PC-9 (cell line): ENCODE measurements at regions of chr1 and their contacts with region 1.

Region 1: GRCh38 chr1:223683586-223684487 is 18.3 kb upstream of the CAPN8 start:
- DNase-seq: peak; percentile 58 to 76
- H3K4me3 ChIP-seq: no peak overlapping the region
- H3K27ac ChIP-seq: no peak overlapping the region
- H3K4me1 ChIP-seq: no peaks in the 10 kb centered on the region
- H3K27me3 ChIP-seq: no peaks in the 10 kb centered on the region
- CTCF ChIP-seq: peak; percentile 90

Region 2: DNA sequence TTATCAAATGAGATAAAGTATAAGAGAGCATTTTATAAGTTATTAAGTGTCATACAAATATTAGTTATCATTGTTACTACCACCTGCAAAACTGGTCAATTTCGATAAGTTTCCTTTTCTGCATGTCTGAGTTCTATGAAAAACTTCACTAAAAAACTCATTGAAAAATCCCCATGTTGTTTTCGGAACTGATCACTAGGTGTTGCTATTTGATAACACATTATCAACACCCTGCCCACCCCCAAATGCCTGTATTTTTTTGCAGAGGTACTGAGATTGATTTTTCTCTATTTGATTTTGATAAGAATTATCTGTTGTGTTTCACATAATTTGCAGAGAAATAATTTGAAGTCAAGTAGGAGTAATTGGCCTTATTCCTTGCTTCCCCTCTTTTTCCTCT is 891.1 kb before region 1 on chr1:
- CTCF ChIA-PET with region 1: no interaction called
- POLR2A ChIA-PET with region 1: no interaction called
- intact Hi-C with region 1: loop called (anchors 1 kb)
- DNase-seq: no peak
- H3K4me3 ChIP-seq: no peak overlapping the region
- H3K27ac ChIP-seq: no peak overlapping the region
- H3K4me1 ChIP-seq: no peaks in the 10 kb centered on the region
- H3K27me3 ChIP-seq: peaks cover 25% of the 10 kb centered on the region; the same call in 1 of the 2 replicates
- CTCF ChIP-seq: peak; percentile 76

Region 3: GRCh38 chr1:223133824-223134435 is 549.9 kb before region 1 on chr1:
- CTCF ChIA-PET with region 1: interaction called, 9 read pairs
- POLR2A ChIA-PET with region 1: no interaction called
- intact Hi-C with region 1: loop called (anchors 1 kb)
- DNase-seq: peak; percentile 91 to 92
- H3K4me3 ChIP-seq: peak overlapping the region; percentile 51; the same call in 1 of the 2 replicates
- H3K27ac ChIP-seq: peak overlapping the region; percentile 73
- H3K4me1 ChIP-seq: peaks cover 33% of the 10 kb centered on the region
- H3K27me3 ChIP-seq: no peaks in the 10 kb centered on the region
- CTCF ChIP-seq: peak; percentile 96

Region 4: DNA sequence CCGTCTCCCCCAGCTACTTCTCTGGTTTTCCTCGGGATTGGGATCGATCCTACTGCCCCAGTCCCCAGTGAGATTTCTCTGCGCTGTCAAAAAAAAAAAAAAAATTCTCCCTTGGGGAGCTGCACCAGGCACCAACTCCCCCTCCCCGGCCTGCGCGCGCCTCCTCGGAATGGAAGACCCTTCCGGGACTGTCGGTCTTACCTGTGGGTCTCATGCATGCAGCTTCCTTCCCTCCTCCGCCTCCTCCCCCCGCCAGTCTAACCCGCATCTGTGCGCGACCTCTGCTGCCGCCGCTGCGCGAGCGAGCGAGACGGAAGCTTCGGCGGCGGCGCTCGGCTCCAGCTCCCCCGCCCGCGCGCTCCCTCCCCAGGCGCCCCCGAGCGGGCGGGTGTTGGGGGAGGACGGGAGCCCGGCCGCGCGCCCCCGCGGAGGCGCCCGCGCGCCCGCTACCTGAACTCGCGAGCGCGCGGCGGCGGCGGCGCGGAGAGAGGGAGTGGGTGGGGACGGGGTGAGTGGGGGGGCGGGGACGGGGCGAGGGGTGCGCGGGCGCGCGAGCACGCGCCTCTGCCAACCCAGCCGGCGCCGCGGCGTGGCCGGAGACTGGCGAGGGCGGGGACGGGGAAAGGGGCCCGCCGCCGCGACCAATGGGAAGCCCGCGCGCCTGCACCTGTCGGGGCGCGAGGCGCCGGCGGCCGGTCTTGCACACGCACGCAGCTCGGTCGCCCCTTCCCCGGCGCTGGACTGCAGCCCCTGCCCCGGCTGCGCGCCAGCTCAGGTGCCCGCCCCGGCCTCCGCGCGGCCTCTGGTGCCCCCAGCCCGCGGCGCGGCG is 319.8 kb before region 1 on chr1 and contains the start of gene SUSD4:
- CTCF ChIA-PET with region 1: no interaction called
- POLR2A ChIA-PET with region 1: no interaction called
- intact Hi-C with region 1: loop called (anchors 1 kb)
- DNase-seq: peak in 1 of 2 experiments; percentile 54
- H3K4me3 ChIP-seq: peak within 1 kb of the TSS; percentile 63
- H3K27ac ChIP-seq: no peak within 1 kb of the TSS
- H3K4me1 ChIP-seq: peaks cover 6% of the 10 kb centered on the region; the same call in 1 of the 2 replicates
- H3K27me3 ChIP-seq: peaks cover 55% of the 10 kb centered on the region
- CTCF ChIP-seq: no peak
- total RNA-seq, gene SUSD4: 2.0 and 3.2 TPM in 2 replicates

Region 5: DNA sequence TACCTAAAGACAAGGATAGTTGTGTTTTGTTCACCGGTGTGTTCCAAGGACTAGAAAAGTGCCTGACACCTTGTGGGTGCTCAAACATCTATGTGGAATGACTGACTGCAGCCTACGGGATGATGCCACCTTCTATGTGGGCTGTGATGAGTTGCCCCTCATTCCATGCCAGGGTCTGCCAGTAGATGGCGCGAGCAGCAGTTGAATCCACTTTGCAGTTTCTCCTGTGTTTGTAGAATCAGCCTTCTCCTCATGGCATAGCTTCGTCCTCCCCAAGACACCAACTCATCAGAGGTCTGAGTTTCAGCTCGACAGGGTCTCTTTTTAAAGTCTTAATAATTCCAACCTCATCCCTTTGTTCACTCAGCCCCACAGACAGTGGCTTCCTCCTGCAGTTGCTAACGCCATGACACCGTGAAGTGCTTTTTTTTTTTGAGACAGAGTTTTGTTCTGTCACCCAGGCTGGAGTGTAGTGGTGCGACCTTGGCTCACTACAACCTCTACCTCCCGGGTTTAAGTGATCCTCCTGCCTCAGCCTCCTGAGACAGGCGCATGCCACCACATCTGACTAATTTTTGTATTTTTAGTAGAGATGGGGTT is 152.0 kb before region 1 on chr1:
- CTCF ChIA-PET with region 1: no interaction called
- POLR2A ChIA-PET with region 1: no interaction called
- intact Hi-C with region 1: loop called (anchors 1 kb)
- DNase-seq: peak; percentile 46 to 68
- H3K4me3 ChIP-seq: no peak overlapping the region
- H3K27ac ChIP-seq: no peak overlapping the region
- H3K4me1 ChIP-seq: no peaks in the 10 kb centered on the region
- H3K27me3 ChIP-seq: no peaks in the 10 kb centered on the region
- CTCF ChIP-seq: peak; percentile 74